ENCODE measurements at regions of chr20 and their contacts with region 1.

Region 1: GRCh38 chr20:62793912-62794724 is 2.2 kb upstream of the MRGBP start:
- DNase-seq: peak; percentile 87 to 98 (median 95)
- ATAC-seq: peak; percentile 71
- H3K4me3 ChIP-seq: peak overlapping the region; percentile 78
- H3K4me3 Mint-ChIP-seq: peak overlapping the region; percentile 88
- H3K27ac ChIP-seq: peak overlapping the region; percentile 79 to 90
- H3K27ac Mint-ChIP-seq: peak overlapping the region; percentile 89
- H3K4me1 ChIP-seq: peaks cover 56% of the 10 kb centered on the region
- H3K4me1 Mint-ChIP-seq: peaks cover 55% of the 10 kb centered on the region
- H3K27me3 ChIP-seq: no peaks in the 10 kb centered on the region
- H3K27me3 Mint-ChIP-seq: no peaks in the 10 kb centered on the region
- CTCF ChIP-seq: no peak

Region 2: GRCh38 chr20:62500237-62500864 is 293.8 kb before region 1 on chr20:
- CTCF ChIA-PET with region 1: interaction called, 9 read pairs
- POLR2A ChIA-PET with region 1: no interaction called
- intact Hi-C with region 1: loop called (anchors 1 kb)
- DNase-seq: peak; percentile 70 to 88 (median 79)
- ATAC-seq: peak; percentile 72
- H3K4me3 ChIP-seq: no peak overlapping the region
- H3K4me3 Mint-ChIP-seq: no peak overlapping the region
- H3K27ac ChIP-seq: no peak overlapping the region
- H3K27ac Mint-ChIP-seq: no peak overlapping the region
- H3K4me1 ChIP-seq: peaks cover 25% of the 10 kb centered on the region
- H3K4me1 Mint-ChIP-seq: peaks cover 12% of the 10 kb centered on the region
- H3K27me3 ChIP-seq: peaks cover 0 to 4% of the 10 kb centered on the region in 2 experiments
- H3K27me3 Mint-ChIP-seq: no peaks in the 10 kb centered on the region
- CTCF ChIP-seq: peak; percentile 71

Region 3: DNA sequence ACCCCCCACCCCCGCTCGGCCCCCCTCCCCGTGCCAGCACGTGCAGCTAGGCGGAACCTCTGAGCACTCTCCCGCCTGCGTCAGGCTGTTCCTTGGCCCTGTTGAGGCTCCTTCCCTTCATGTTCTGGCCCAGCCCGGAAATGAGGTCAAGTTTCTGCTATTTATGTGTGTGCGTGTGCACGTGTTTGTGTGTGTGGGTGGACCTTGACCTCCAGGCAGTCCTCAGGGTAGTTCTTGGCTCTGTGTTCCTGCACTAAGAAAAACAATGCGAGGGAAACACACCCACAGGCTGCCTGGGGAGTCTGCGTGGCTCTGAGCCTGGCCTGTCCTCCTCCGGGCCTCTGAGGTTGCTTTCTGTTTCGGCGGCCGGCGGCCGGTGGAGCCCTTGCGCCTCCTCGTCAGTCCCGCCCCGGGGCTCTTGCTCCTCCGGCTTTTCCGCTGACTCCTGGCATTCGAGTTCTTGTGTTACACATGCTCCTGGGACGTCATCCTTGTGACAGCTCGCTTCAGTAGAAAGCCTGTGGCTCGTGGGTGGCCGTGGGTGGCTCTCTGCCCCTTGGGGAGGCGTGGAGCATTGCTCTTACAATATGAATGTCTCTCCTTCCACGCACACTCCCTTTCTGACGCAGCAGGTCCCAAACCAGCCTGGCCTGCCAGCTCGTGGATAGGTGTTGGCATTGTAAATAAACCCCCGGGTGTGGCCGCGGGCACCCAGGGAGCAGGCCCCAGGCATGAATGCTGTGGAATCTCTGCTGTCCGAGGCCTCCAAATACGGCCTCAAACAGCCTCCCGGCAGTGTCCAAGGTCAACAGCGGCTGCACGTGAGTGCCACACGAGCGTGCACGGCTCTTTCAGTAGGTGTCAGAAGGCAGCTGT is 141.8 kb before region 1 on chr20:
- CTCF ChIA-PET with region 1: interaction called, 8 read pairs
- POLR2A ChIA-PET with region 1: interaction called, 85 read pairs
- intact Hi-C with region 1: no loop called
- DNase-seq: peak; percentile 48 to 90 (median 64)
- ATAC-seq: peak; percentile 64
- H3K4me3 ChIP-seq: peak overlapping the region; percentile 56
- H3K4me3 Mint-ChIP-seq: peak overlapping the region; percentile 93
- H3K27ac ChIP-seq: peak overlapping the region; percentile 70 to 89
- H3K27ac Mint-ChIP-seq: peak overlapping the region; percentile 91
- H3K4me1 ChIP-seq: peaks cover 38% of the 10 kb centered on the region
- H3K4me1 Mint-ChIP-seq: peaks cover 30% of the 10 kb centered on the region
- H3K27me3 ChIP-seq: no peaks in the 10 kb centered on the region
- H3K27me3 Mint-ChIP-seq: no peaks in the 10 kb centered on the region
- CTCF ChIP-seq: no peak

Region 4: GRCh38 chr20:62710886-62711493 is 83.1 kb before region 1 on chr20:
- CTCF ChIA-PET with region 1: interaction called, 3 read pairs
- POLR2A ChIA-PET with region 1: interaction called, 17 read pairs
- intact Hi-C with region 1: no loop called
- DNase-seq: peak in 9 of 14 experiments; percentile 8 to 66 (median 40)
- ATAC-seq: peak; percentile 67
- H3K4me3 ChIP-seq: no peak overlapping the region
- H3K4me3 Mint-ChIP-seq: peak overlapping the region; percentile 30
- H3K27ac ChIP-seq: no peak overlapping the region
- H3K27ac Mint-ChIP-seq: no peak overlapping the region
- H3K4me1 ChIP-seq: peaks cover 30% of the 10 kb centered on the region
- H3K4me1 Mint-ChIP-seq: peaks cover 23% of the 10 kb centered on the region
- H3K27me3 ChIP-seq: peaks cover 20 to 29% of the 10 kb centered on the region in 2 experiments
- H3K27me3 Mint-ChIP-seq: peaks cover 14% of the 10 kb centered on the region
- CTCF ChIP-seq: no peak

Region 5: DNA sequence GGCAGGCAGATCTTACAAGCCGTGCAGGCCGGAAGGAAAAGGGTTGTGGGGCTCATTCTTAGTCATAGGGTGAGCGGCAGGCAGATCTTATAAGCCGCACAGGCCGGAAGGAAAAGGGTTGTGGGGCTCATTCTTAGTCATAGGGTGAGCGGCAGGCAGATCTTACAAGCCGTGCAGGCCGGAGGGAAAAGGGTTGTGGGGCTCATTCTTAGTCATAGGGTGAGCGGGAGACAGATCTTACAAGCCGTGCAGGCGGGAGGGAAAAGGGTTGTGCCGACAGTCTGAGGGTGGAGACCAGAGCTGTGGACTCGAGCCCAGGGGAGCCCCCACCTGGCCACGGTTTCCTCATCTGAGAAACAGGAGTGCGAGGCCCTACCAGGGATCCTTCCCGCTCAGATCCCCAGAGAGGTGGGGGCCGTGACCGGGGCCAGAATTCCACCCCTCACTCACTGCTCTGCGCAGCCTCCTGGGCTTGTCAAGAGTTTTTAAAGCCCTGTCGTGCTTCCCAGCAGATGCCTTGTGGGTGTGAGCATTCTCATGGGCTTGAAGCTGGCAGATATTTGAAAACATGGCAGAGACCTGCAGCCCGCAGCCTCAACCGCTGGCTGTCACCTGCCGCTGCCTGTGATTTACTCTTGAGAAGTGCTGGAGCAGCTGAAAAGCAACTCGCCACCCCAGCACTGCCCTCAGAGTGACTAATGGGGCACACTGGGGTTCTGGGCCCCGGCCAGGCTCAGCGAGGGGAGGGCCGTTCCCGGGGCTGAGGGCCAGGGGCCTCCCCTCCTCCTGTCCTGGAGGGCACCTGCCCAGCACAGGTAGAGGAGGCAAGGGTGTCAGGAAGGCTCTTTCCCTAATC is 53.6 kb before region 1 on chr20:
- CTCF ChIA-PET with region 1: interaction called, 11 read pairs
- POLR2A ChIA-PET with region 1: interaction called, 62 read pairs
- intact Hi-C with region 1: loop called (anchors 1 kb)
- DNase-seq: peak; percentile 64 to 94 (median 78)
- ATAC-seq: peak; percentile 77
- H3K4me3 ChIP-seq: peak overlapping the region; percentile 55
- H3K4me3 Mint-ChIP-seq: peak overlapping the region; percentile 81
- H3K27ac ChIP-seq: peak overlapping the region; percentile 86 to 88
- H3K27ac Mint-ChIP-seq: peak overlapping the region; percentile 86
- H3K4me1 ChIP-seq: peaks cover 68% of the 10 kb centered on the region
- H3K4me1 Mint-ChIP-seq: peaks cover 52% of the 10 kb centered on the region
- H3K27me3 ChIP-seq: no peaks in the 10 kb centered on the region
- H3K27me3 Mint-ChIP-seq: no peaks in the 10 kb centered on the region
- CTCF ChIP-seq: no peak

Region 6: GRCh38 chr20:62767714-62768480 is 26.2 kb before region 1 on chr20:
- CTCF ChIA-PET with region 1: no interaction called
- POLR2A ChIA-PET with region 1: no interaction called
- intact Hi-C with region 1: no loop called
- DNase-seq: no peak
- ATAC-seq: no peak
- H3K4me3 ChIP-seq: no peak overlapping the region
- H3K4me3 Mint-ChIP-seq: no peak overlapping the region
- H3K27ac ChIP-seq: no peak overlapping the region
- H3K27ac Mint-ChIP-seq: no peak overlapping the region
- H3K4me1 ChIP-seq: peaks cover 22% of the 10 kb centered on the region
- H3K4me1 Mint-ChIP-seq: peaks cover 32% of the 10 kb centered on the region
- H3K27me3 ChIP-seq: no peaks in the 10 kb centered on the region
- H3K27me3 Mint-ChIP-seq: no peaks in the 10 kb centered on the region
- CTCF ChIP-seq: no peak

Region 7: DNA sequence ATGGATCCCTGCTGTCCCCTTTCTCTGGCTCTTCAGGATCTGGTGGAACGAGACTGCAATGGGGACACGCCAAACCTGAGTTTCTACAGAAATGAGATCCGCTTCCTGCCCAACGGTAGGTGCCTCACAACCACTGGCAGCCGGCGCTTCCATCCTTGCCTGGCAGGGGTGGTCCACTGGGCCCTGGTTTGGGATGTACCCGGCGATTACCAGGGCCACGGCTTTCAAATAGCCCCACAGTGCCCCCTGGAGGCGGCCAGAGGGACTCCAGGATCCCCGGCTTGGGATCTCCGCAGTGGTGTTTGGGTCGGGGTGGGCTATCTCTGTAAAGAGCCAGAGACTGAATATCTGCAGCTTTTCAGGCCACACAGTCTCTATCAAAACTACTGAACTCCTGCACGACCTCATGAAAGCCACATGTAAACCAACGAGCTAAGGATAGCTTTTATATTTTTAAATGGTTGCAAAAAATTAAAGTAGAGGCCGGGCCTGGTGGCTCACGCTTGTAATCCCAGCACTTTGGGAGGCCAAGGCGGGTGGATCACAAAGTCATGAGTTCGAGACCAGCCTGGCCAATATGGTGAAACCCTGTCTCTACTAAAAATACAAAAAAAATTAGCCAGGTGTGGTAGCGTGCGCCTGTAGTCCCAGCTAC is 14.2 kb after region 1 on chr20:
- CTCF ChIA-PET with region 1: interaction called, 7 read pairs
- POLR2A ChIA-PET with region 1: interaction called, 49 read pairs
- intact Hi-C with region 1: loop called (anchors 1 kb)
- DNase-seq: peak; percentile 64 to 85 (median 72)
- ATAC-seq: peak; percentile 58
- H3K4me3 ChIP-seq: no peak overlapping the region
- H3K4me3 Mint-ChIP-seq: peak overlapping the region; percentile 89
- H3K27ac ChIP-seq: no peak overlapping the region
- H3K27ac Mint-ChIP-seq: peak overlapping the region; percentile 84
- H3K4me1 ChIP-seq: peaks cover 41% of the 10 kb centered on the region
- H3K4me1 Mint-ChIP-seq: peaks cover 28% of the 10 kb centered on the region
- H3K27me3 ChIP-seq: no peaks in the 10 kb centered on the region
- H3K27me3 Mint-ChIP-seq: peaks cover 4% of the 10 kb centered on the region
- CTCF ChIP-seq: peak; percentile 91